Heart left ventricle (tissue), 16 donors: ENCODE measurements at regions of chr10 and their contacts with region 1.

Region 1: DNA sequence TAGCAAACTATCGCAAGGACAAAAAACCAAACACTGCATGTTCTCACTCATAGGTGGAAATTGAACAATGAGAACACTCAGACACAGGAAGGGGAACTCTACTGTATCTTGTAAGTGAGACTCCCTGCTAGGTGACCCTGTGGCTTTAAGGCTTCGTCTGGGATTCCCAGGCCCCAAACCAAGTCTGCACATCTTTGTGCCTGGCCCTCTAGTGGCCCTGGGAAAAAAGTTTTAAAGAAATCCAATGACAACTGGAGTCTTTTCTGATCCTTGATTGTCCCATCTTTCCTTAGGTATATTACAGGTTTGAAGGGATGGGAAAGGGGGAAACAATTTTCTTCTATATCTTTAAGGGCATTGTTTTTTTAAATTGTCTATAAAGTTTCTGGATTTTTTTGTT is 10.6 kb upstream of the LIPM start:
- DNase-seq: peak in 1 of 5 donors; percentile 14
- ATAC-seq: peak in 3 of 4 donors; percentile 36 to 48 (median 39)
- H3K4me3 ChIP-seq: no peak overlapping the region
- H3K27ac ChIP-seq: no peak overlapping the region
- H3K4me1 ChIP-seq: peaks cover 0 to 3% (median 0%) of the 10 kb centered on the region in 12 donors
- H3K27me3 ChIP-seq: peaks cover 0 to 4% (median 0%) of the 10 kb centered on the region in 9 donors
- CTCF ChIP-seq: peak in 11 of 12 donors; percentile 13 to 50 (median 32)
- POLR2A ChIP-seq: no peak

Region 2: GRCh38 chr10:88565072-88565471 is 226.9 kb before region 1 on chr10:
- intact Hi-C with region 1: loop called in 4 of 10 experiments (anchors 5 to 10 kb)
- DNase-seq: no peak
- ATAC-seq: peak in 1 of 4 donors; percentile 33
- H3K4me3 ChIP-seq: no peak overlapping the region
- H3K27ac ChIP-seq: no peak overlapping the region
- H3K4me1 ChIP-seq: no peaks in the 10 kb centered on the region
- H3K27me3 ChIP-seq: no peaks in the 10 kb centered on the region
- CTCF ChIP-seq: peak in 11 of 12 donors; percentile 6 to 53 (median 35)
- POLR2A ChIP-seq: no peak

Region 3: DNA sequence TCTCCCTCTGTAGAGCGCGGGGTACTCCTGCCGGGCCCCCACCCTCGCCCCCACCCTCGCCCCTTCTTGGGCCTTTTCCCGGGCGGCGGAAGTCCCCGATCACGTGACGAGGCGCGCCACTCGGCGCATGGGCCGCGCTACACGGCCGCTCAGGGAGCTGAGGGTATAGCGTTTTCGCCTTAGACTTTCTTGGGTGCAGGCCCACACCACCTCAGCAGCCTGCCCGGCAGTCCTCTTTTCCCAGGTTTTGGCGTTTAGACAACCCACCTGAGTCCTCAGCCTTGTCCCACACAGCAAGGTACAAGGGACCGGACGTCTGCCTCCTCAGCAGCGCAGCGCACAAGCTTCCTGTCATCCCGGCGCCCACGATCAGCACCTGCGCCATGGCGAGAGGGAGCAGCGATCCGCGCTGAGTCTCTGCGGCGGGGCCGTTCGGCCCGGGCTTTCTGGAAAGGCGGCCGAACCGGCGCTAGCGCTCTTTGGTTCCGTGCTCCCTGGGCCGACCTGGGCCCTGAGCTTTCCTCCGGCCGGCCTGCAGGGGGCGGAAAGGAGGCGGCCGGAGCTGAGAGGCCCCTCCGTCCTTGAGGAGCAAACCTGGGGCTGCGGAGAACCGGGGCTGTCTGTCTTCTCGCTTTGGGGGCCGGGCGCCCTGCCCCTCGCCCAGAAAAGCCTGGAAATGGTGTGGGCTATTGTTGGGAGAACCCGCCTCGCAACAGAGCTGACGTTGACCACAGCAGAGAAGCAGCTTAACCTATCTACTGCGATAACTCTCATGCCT is 208.9 kb before region 1 on chr10 and contains the start of gene RNLS:
- intact Hi-C with region 1: loop called in 1 of 10 experiments (anchors 10 kb)
- DNase-seq: peak; percentile 68 to 87 (median 79)
- ATAC-seq: peak; percentile 93 to 96 (median 96)
- H3K4me3 ChIP-seq: peak within 1 kb of the TSS; percentile 51 to 83 (median 74)
- H3K27ac ChIP-seq: peak within 1 kb of the TSS; percentile 85 to 95 (median 93)
- H3K4me1 ChIP-seq: peaks cover 0 to 17% (median 4%) of the 10 kb centered on the region in 12 donors
- H3K27me3 ChIP-seq: no peaks in the 10 kb centered on the region
- CTCF ChIP-seq: peak; percentile 71 to 91 (median 82)
- POLR2A ChIP-seq: no peak
- total RNA-seq, gene RNLS: 8.7 to 30.7 (median 16.7) TPM

Region 4: DNA sequence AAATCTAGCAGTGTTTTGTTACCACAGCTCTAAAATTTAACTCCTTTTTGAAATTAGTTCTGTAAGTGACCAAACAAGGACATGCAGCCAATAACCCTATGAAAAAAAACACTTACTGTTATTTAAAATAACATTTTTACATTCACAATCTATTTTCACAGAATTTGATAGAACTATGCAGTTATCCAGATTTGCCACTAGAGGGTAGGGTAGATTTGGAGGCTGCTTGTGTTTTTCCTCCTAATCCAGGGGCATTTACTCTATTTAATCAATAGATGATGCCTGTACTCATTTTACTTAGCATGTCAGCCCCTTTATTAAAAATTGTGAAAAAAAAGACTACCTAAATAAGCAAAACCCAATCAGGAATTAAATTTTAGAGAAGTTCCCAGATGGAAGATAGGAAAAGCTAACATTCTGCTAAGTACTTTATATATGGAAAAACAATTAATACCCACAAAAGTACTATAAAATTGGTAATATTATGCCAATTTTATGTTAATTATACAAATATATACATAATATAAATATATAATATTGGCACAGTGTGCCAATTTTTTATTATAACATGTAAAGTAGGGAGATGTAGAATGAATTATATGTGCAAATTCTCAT is 104.0 kb before region 1 on chr10:
- intact Hi-C with region 1: loop called in 5 of 10 experiments (anchors 5 to 10 kb)
- DNase-seq: no peak
- ATAC-seq: no peak
- H3K4me3 ChIP-seq: no peak overlapping the region
- H3K27ac ChIP-seq: no peak overlapping the region
- H3K4me1 ChIP-seq: no peaks in the 10 kb centered on the region
- H3K27me3 ChIP-seq: peaks cover 0 to 5% (median 0%) of the 10 kb centered on the region in 9 donors
- CTCF ChIP-seq: peak; percentile 49 to 78 (median 62)
- POLR2A ChIP-seq: no peak

Region 5: GRCh38 chr10:88693392-88694020 is 98.4 kb before region 1 on chr10:
- intact Hi-C with region 1: loop called in 5 of 10 experiments (anchors 5 to 10 kb)
- DNase-seq: no peak
- ATAC-seq: no peak
- H3K4me3 ChIP-seq: no peak overlapping the region
- H3K27ac ChIP-seq: no peak overlapping the region
- H3K4me1 ChIP-seq: no peaks in the 10 kb centered on the region
- H3K27me3 ChIP-seq: peaks cover 0 to 3% (median 0%) of the 10 kb centered on the region in 9 donors
- CTCF ChIP-seq: peak in 3 of 12 donors; percentile 9 to 19 (median 18)
- POLR2A ChIP-seq: no peak